Mammary epithelial cell (primary cell): ENCODE measurements at regions of chr2 and their contacts with region 1.

Region 1: GRCh38 chr2:105537466-105537865 is 138.6 kb upstream of the FHL2 start:
- DNase-seq: peak; percentile 73
- H3K4me3 ChIP-seq: no peak overlapping the region
- H3K27ac ChIP-seq: peak overlapping the region; percentile 8
- H3K4me1 ChIP-seq: peaks cover 42% of the 10 kb centered on the region
- H3K27me3 ChIP-seq: no peaks in the 10 kb centered on the region
- CTCF ChIP-seq: no peak

Region 2: GRCh38 chr2:105369747-105370690 is 167.4 kb before region 1 on chr2:
- CTCF ChIA-PET with region 1: interaction called, 3 read pairs
- dilution Hi-C with region 1: no loop called
- in situ Hi-C with region 1: loop called in 1 of 2 experiments (anchors 10 kb)
- intact Hi-C with region 1: no loop called
- DNase-seq: peak; percentile 71
- H3K4me3 ChIP-seq: no peak overlapping the region
- H3K27ac ChIP-seq: no peak overlapping the region
- H3K4me1 ChIP-seq: peaks cover 35% of the 10 kb centered on the region
- H3K27me3 ChIP-seq: no peaks in the 10 kb centered on the region
- CTCF ChIP-seq: peak; percentile 81 to 91

Region 3: DNA sequence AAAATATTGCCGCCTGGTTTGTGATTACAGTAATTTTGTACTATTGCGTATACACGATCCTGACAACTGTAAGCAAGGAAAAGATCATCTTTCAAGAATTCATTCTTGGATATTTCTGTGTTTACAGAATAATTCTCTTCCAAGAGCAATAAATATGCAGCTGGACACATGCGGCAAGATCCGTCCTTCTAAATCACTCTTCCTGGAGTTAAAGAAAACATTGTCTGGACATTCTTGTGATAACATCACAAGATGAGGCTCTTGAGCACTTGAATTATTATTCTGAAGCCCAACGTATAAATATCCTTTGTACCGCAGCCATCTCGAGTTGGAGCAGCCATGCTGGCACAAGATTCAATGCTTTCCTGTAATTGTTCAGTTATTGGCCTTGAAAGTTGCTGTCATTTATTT is 148.5 kb before region 1 on chr2:
- CTCF ChIA-PET with region 1: no interaction called
- dilution Hi-C with region 1: no loop called
- in situ Hi-C with region 1: no loop called
- intact Hi-C with region 1: no loop called
- DNase-seq: no peak
- H3K4me3 ChIP-seq: no peak overlapping the region
- H3K27ac ChIP-seq: no peak overlapping the region
- H3K4me1 ChIP-seq: peaks cover 59% of the 10 kb centered on the region
- H3K27me3 ChIP-seq: no peaks in the 10 kb centered on the region
- CTCF ChIP-seq: no peak